Gastrocnemius medialis (tissue), 4 donors: ENCODE measurements at regions of chr11 and their contacts with region 1.

Region 1: DNA sequence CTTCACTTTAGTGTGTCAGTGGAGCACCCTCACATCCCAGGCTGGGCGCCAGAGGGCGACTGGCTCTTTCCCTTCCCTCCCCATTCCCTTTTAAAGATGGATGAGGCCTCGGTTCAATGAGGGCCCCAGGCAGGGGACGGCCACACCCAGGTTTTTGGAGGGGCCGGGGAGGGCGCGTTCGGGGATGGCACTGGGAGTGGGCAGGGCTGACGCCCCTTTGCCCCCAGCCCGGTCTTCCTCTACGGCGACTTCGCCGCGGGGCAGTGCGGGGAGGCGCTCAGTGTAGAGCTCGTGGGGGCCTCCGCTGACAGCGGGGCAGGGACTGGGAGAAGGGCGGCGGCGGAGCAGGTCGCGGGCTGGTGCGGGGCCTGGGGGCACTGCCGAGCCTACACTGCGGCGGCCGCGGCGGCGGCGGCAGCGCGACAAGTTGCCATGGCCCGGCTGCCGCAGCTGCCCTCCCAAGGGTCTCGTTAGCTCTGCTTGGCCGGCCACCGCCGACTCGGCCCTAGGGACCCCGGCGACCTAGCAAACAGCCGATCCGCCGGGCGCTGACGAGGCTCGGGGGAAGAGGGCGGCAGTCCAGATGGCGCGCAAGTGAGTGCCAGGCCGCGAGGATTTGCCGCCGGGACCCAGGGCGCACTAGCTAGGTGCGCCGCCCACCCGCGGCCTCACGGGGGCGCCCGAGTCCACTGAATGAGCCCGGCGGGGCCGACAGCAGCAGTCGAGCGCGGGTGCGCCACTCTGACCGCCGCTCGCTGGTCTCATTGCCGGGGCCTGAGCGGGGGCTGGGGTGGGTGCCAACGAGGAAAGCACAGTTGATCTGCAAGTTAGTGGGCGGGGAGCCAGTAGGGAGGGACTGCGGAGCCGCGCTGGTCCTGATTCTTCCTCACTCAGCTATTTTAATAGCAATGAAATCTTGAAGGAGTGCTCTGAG is 92.7 kb downstream of the RRM1 start:
- DNase-seq: peak; percentile 66 to 76
- ATAC-seq: peak; percentile 73 to 87
- H3K4me3 ChIP-seq: peak overlapping the region; percentile 54 to 68 (median 62)
- H3K27ac ChIP-seq: peak overlapping the region in 1 of 4 donors; percentile 56
- H3K4me1 ChIP-seq: peaks cover 0 to 13% of the 10 kb centered on the region in 2 donors
- H3K27me3 ChIP-seq: no peaks in the 10 kb centered on the region
- CTCF ChIP-seq: peak; percentile 86 to 96 (median 93)
- POLR2A ChIP-seq: no peak

Region 2: GRCh38 chr11:4493480-4493818 is 306.1 kb after region 1 on chr11:
- in situ Hi-C with region 1: loop called (anchors 5 kb)
- intact Hi-C with region 1: loop called (anchors 1 kb)
- DNase-seq: no peak
- ATAC-seq: no peak
- H3K4me3 ChIP-seq: no peak overlapping the region
- H3K27ac ChIP-seq: no peak overlapping the region
- H3K4me1 ChIP-seq: no peaks in the 10 kb centered on the region
- H3K27me3 ChIP-seq: peaks cover 0 to 4% (median 0%) of the 10 kb centered on the region in 3 donors
- CTCF ChIP-seq: peak in 1 of 5 experiments; percentile 8
- POLR2A ChIP-seq: no peak

Region 3: DNA sequence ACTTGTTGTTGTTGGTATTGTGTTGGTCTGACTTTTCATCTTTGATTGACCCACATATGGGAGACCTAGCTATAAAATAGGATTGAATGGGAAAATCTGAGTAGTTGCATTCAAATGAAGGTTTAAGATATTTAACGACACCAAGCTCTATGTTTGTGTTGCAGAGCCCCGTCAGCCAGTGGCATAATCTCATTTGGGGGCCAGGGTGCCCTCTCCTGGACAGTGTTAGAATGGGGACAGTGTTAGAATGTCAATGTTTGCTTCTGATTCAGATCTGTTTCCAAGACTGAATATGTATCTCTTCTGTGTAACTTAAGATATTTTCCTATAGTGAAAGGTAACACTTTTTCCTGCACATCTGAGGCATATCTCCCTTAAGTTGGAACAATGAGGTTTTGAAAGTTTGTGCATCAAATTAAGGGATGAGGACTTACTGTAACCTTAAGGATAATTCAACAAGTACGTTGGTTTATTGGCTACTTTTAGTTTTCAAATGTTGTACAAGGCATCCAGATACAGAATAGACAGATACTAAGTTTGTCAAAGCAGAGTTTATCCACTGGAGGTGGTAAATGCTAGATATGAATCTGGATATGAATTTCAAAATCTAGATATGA is 352.4 kb after region 1 on chr11:
- in situ Hi-C with region 1: no loop called
- intact Hi-C with region 1: loop called (anchors 5 kb)
- DNase-seq: no peak
- ATAC-seq: peak in 1 of 2 donors; percentile 41
- H3K4me3 ChIP-seq: no peak overlapping the region
- H3K27ac ChIP-seq: no peak overlapping the region
- H3K4me1 ChIP-seq: no peaks in the 10 kb centered on the region
- H3K27me3 ChIP-seq: no peaks in the 10 kb centered on the region
- CTCF ChIP-seq: peak in 4 of 5 experiments; percentile 6 to 58 (median 48)
- POLR2A ChIP-seq: no peak